Endothelial cell of umbilical vein (primary cell): ENCODE measurements at regions of chr15 and their contacts with region 1.

Region 1: DNA sequence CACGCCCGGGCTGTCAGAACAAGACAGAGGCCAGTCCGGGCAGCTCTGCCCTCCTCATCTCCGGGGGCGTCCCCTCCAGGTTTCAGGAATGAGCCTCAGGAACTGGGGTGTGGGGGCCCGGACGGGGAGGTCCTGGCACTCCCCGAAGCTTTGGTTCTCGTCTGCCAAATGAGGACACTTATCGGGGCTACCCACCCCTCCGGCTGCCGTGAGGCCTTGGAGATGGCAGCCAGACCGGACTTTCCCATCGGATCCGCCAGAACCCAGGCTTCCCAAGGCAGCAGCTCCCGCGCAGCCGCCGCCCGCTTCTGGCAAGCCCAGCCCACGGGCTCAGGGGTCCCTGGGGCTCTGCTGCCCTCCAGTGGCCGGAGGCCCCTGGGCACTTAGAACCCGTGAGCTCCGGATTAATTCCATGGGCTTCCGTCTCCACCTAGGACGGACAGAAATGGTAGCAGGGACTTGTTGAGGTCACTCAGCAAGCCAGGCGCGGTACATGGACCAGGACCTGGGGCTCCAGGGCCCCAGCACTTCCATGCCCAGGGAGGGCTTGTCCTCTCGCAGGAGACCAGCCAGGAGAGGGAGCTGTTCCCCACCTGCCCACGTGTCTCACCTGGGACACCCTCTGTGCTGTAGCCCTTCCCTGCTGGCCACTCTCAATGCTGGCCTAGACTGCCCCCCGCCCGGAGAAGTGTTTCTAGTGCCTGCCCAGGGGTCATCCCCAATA is 89.4 kb downstream of the LINGO1 start:
- DNase-seq: peak; percentile 80
- H3K4me3 ChIP-seq: peak overlapping the region in 2 of 3 experiments; percentile 24 to 25
- H3K27ac ChIP-seq: peak overlapping the region; percentile 39
- H3K4me1 ChIP-seq: peaks cover 12% of the 10 kb centered on the region
- H3K27me3 ChIP-seq: no peaks in the 10 kb centered on the region
- CTCF ChIP-seq: peak; percentile 97 to 98
- POLR2A ChIP-seq: no peak

Region 2: DNA sequence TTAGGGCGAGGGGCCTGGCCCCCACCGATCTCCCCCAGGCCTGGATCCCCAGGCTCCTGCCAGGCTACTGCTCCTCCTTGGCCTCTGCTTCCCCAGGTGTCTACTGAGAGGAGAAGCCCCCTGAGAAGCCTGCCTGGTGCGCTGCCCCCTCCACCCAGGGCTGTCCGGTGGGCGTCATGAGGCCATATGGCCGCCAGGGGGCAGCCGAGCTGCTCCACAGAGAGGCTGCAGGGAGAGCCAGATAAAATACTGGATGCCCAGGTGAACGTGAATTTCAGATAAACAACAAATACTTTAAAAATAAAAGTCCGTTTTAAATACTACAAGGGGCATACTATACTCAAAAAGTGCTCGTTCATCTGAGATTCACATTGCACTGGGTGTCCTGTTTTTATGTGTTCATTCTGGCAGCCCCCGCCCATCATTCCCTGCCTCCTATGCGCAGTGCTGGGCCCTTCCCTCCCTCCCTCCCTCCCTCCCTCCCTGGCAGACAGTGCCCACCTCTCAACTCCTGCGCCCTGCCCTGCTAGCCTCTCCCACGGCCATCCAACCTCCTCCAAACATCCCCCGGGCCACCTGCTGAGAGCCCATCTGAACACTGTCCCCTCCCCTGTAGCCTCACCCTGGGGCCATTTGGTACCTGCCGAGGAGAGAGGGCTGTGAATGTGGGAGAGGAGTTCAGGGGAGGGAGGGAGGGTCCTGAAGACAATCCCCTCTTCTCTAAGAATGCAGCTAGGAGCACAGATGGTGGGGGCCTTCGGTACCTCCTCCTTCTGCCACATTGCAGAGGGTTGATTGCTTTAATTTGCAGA is 518.8 kb before region 1 on chr15:
- CTCF ChIA-PET with region 1: interaction called, 45 read pairs
- POLR2A ChIA-PET with region 1: no interaction called
- dilution Hi-C with region 1: no loop called
- intact Hi-C with region 1: loop called (anchors 1 kb)
- DNase-seq: peak; percentile 40
- H3K4me3 ChIP-seq: no peak overlapping the region
- H3K27ac ChIP-seq: no peak overlapping the region
- H3K4me1 ChIP-seq: peaks cover 11% of the 10 kb centered on the region
- H3K27me3 ChIP-seq: no peaks in the 10 kb centered on the region
- CTCF ChIP-seq: peak; percentile 91
- POLR2A ChIP-seq: no peak

Region 3: GRCh38 chr15:77107531-77108355 is 435.6 kb before region 1 on chr15:
- CTCF ChIA-PET with region 1: interaction called, 149 read pairs
- POLR2A ChIA-PET with region 1: no interaction called
- dilution Hi-C with region 1: no loop called
- intact Hi-C with region 1: loop called (anchors 1 kb)
- DNase-seq: peak; percentile 53
- H3K4me3 ChIP-seq: no peak overlapping the region
- H3K27ac ChIP-seq: no peak overlapping the region
- H3K4me1 ChIP-seq: peaks cover 3% of the 10 kb centered on the region
- H3K27me3 ChIP-seq: no peaks in the 10 kb centered on the region
- CTCF ChIP-seq: peak; percentile 61 to 78
- POLR2A ChIP-seq: no peak

Region 4: GRCh38 chr15:77160562-77161478 is 382.5 kb before region 1 on chr15:
- CTCF ChIA-PET with region 1: interaction called, 21 read pairs
- POLR2A ChIA-PET with region 1: no interaction called
- dilution Hi-C with region 1: no loop called
- intact Hi-C with region 1: no loop called
- DNase-seq: peak; percentile 73
- H3K4me3 ChIP-seq: no peak overlapping the region
- H3K27ac ChIP-seq: peak overlapping the region; percentile 27
- H3K4me1 ChIP-seq: peaks cover 21% of the 10 kb centered on the region
- H3K27me3 ChIP-seq: no peaks in the 10 kb centered on the region
- CTCF ChIP-seq: no peak
- POLR2A ChIP-seq: no peak

Region 5: DNA sequence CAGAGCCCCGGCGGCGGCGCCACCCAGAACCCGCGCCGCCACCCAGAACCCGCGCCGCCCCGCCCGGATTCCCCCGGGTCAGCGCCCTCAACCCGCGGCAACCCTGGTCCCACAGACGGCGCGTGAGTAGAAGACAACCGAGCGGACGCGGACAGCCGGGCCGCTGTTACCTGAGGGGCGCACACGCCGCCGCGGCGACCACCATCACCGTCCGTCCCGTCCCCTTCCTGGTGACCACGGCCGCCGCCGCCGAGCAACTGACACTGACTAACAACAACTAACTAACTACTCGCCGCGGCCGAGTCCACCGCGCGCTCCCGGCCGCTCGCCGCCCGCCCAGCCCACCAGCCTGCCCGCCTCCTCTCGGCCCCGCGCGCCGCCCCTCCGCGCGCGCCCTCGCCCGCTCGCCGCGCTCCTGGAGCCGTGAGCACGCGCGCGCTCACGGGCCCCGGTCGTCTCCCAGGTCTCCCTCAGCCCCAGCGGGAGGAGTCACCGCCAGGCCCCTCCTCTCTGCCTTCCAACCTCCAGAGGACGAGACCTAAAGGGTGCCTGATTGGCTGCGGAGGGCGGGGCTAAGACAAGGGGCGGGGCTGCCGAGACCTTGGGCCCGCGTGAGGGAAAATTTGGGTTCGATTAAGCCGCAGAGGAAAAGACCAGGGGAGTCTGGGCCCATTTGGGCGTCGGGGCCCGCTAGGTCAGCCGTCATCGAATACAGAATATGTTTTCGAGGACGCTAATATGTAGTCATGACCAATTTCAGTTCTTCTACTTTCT is 123.3 kb before region 1 on chr15 and contains the start of gene PEAK1:
- CTCF ChIA-PET with region 1: interaction called, 39 read pairs
- POLR2A ChIA-PET with region 1: no interaction called
- dilution Hi-C with region 1: no loop called
- intact Hi-C with region 1: loop called (anchors 1 kb)
- DNase-seq: peak; percentile 98
- H3K4me3 ChIP-seq: peak within 1 kb of the TSS; percentile 79 to 99 (median 95)
- H3K27ac ChIP-seq: peak within 1 kb of the TSS; percentile 95
- H3K4me1 ChIP-seq: peaks cover 43% of the 10 kb centered on the region
- H3K27me3 ChIP-seq: no peaks in the 10 kb centered on the region
- CTCF ChIP-seq: no peak
- POLR2A ChIP-seq: peak; percentile 84
- total RNA-seq, gene PEAK1: 79.2 and 91.9 TPM in 2 replicates

Region 6: GRCh38 chr15:77507911-77508310 is 35.4 kb before region 1 on chr15:
- CTCF ChIA-PET with region 1: interaction called, 87 read pairs
- POLR2A ChIA-PET with region 1: no interaction called
- dilution Hi-C with region 1: no loop called
- intact Hi-C with region 1: loop called (anchors 2 kb)
- DNase-seq: peak; percentile 82
- H3K4me3 ChIP-seq: peak overlapping the region in 1 of 3 experiments; percentile 20
- H3K27ac ChIP-seq: peak overlapping the region; percentile 95
- H3K4me1 ChIP-seq: peaks cover 39% of the 10 kb centered on the region
- H3K27me3 ChIP-seq: no peaks in the 10 kb centered on the region
- CTCF ChIP-seq: no peak
- POLR2A ChIP-seq: no peak